ENCODE measurements at regions of chr1 and their contacts with region 1.

Region 1: DNA sequence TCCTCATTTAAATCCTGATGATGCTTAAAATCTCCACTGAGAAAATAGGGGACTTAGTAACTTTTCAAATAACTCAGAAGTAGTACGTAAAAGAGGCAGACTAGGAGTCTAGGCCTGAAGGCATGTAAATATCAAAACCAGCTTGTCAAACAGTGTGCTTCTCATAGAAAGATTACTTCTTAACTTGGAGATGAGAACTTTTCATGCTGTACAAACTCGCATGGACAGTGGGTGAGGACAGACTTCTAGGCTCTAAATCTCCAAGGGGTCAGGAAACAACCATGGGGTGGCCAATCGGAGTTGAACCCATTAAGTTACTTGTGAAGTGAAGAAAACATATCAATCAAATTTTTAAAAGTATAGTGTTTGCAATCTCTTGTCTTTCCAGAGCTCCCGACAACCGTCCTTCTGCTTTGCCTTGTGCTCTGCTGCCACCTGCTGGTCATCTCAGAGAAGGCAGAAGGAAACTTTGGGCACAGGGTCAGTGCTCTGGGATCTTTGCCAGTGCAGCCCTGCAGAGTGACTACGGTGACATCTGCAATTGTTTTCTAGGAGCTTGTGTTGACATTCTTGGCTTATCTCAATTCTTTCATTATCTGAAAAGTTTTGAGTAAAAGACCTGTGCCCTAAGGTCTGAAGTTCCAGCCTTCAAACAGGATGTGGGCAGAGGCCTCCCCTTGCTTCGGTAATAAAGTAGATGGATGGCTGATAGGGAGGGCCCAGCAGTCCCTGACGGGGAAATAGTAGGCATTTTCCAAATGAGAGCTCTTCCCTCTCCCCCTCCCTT is 105.1 kb upstream of the PDE4B start:
- DNase-seq: peak; percentile 86 to 90 (median 89)
- H3K4me3 ChIP-seq: no peak overlapping the region
- H3K27ac ChIP-seq: no peak overlapping the region
- H3K4me1 ChIP-seq: peaks cover 0 to 5% (median 0%) of the 10 kb centered on the region in 3 donors
- H3K27me3 ChIP-seq: no peaks in the 10 kb centered on the region
- CTCF ChIP-seq: peak; percentile 99

Region 2: GRCh38 chr1:65235867-65236805 is 451.5 kb before region 1 on chr1:
- intact Hi-C with region 1: loop called (anchors 10 kb)
- DNase-seq: peak in 2 of 5 donors; percentile 56 to 60
- H3K4me3 ChIP-seq: no peak overlapping the region
- H3K27ac ChIP-seq: no peak overlapping the region
- H3K4me1 ChIP-seq: no peaks in the 10 kb centered on the region
- H3K27me3 ChIP-seq: no peaks in the 10 kb centered on the region
- CTCF ChIP-seq: peak; percentile 49